ENCODE measurements at regions of chr12 and their contacts with region 1.

Region 1: DNA sequence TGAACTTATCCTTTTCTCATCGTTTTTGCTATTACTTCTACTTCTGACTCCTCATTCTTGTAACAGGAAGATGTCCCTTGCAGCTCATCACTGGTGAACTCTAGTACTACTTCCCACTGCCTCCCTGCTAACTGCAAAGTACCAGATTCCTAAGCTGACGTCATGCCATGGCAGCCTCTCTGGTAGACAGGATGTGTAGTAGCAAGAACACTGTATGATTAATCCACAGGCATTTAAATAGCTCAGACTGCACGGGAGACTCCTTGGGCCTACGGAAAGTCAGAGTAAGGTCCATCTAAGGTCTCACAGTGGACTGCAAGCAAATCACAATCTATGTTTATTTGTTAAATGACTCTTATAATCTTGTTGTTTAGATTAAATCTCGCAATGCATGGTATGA is 43.5 kb downstream of the DNAI7 start:
- DNase-seq: peak; percentile 76
- H3K4me3 Mint-ChIP-seq: no peak overlapping the region
- H3K27ac Mint-ChIP-seq: no peak overlapping the region
- H3K4me1 Mint-ChIP-seq: peaks cover 10% of the 10 kb centered on the region
- H3K27me3 Mint-ChIP-seq: no peaks in the 10 kb centered on the region
- CTCF ChIP-seq: no peak

Region 2: GRCh38 chr12:24852420-24852819 is 299.1 kb before region 1 on chr12:
- CTCF ChIA-PET with region 1: interaction called, 14 read pairs
- POLR2A ChIA-PET with region 1: interaction called, 3 read pairs
- intact Hi-C with region 1: no loop called
- DNase-seq: no peak
- H3K4me3 Mint-ChIP-seq: no peak overlapping the region
- H3K27ac Mint-ChIP-seq: no peak overlapping the region
- H3K4me1 Mint-ChIP-seq: peaks cover 18% of the 10 kb centered on the region
- H3K27me3 Mint-ChIP-seq: no peaks in the 10 kb centered on the region
- CTCF ChIP-seq: peak; percentile 42

Region 3: GRCh38 chr12:24960222-24960855 is 191.1 kb before region 1 on chr12:
- CTCF ChIA-PET with region 1: interaction called, 15 read pairs
- POLR2A ChIA-PET with region 1: no interaction called
- intact Hi-C with region 1: no loop called
- DNase-seq: peak; percentile 59
- H3K4me3 Mint-ChIP-seq: no peak overlapping the region
- H3K27ac Mint-ChIP-seq: no peak overlapping the region
- H3K4me1 Mint-ChIP-seq: no peaks in the 10 kb centered on the region
- H3K27me3 Mint-ChIP-seq: no peaks in the 10 kb centered on the region
- CTCF ChIP-seq: peak; percentile 66

Region 4: GRCh38 chr12:25208554-25208953 is 57.1 kb after region 1 on chr12:
- CTCF ChIA-PET with region 1: no interaction called
- POLR2A ChIA-PET with region 1: no interaction called
- intact Hi-C with region 1: no loop called
- DNase-seq: no peak
- H3K4me3 Mint-ChIP-seq: no peak overlapping the region
- H3K27ac Mint-ChIP-seq: peak overlapping the region; percentile 16
- H3K4me1 Mint-ChIP-seq: no peaks in the 10 kb centered on the region
- H3K27me3 Mint-ChIP-seq: no peaks in the 10 kb centered on the region
- CTCF ChIP-seq: no peak

Region 5: DNA sequence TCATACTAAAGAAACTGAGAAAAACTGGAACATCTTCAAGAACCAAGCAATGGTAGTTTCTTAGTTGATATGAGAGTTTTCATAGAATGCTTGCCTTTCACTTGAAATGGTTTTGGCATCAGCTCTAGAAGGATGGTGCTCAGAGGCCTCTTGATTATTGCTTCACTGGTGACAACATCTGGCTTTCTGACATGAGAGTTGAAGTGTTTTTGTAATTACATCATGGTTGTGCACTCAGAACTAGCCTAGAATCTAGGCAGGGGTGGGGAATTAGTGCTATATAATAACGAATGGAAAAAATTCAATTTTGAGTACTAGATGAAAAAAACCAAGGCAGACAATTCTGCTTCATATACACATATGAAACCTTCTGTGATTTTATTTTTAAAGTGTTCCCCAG is 574.5 kb after region 1 on chr12:
- CTCF ChIA-PET with region 1: no interaction called
- POLR2A ChIA-PET with region 1: no interaction called
- intact Hi-C with region 1: no loop called
- DNase-seq: peak; percentile 39
- H3K4me3 Mint-ChIP-seq: no peak overlapping the region
- H3K27ac Mint-ChIP-seq: no peak overlapping the region
- H3K4me1 Mint-ChIP-seq: peaks cover 25% of the 10 kb centered on the region
- H3K27me3 Mint-ChIP-seq: no peaks in the 10 kb centered on the region
- CTCF ChIP-seq: no peak